ENCODE measurements at regions of chr15 and their contacts with region 1.

Region 1: DNA sequence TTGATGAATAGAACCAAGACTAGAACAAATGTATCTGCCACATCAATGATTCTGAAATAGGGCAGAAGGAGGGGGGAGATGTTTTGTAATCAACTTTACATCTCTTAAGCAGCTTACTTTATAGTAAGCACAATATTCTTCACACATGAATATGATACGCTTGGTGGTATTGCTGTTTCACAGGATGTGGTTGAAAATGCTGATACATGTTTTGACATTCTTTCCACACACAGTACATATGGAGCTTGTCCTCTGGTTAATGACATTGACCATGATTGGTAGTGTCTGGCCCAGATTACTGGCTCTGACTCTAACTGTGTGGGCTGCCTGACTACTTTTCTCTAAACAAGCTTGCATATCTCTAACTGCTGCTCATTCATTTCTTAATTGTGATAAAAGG is 168.9 kb downstream of the KLHL25 start:
- DNase-seq: no peak
- H3K4me3 ChIP-seq: no peak overlapping the region
- H3K27ac ChIP-seq: no peak overlapping the region
- H3K4me1 ChIP-seq: peaks cover 0 to 72% (median 27%) of the 10 kb centered on the region in 4 donors
- H3K27me3 ChIP-seq: no peaks in the 10 kb centered on the region
- CTCF ChIP-seq: no peak

Region 2: GRCh38 chr15:85689729-85690128 is 63.9 kb after region 1 on chr15:
- intact Hi-C with region 1: loop called (anchors 10 kb)
- DNase-seq: peak in 1 of 2 donors; percentile 47
- H3K4me3 ChIP-seq: peak overlapping the region; percentile 35 to 39
- H3K27ac ChIP-seq: peak overlapping the region; percentile 36 to 60
- H3K4me1 ChIP-seq: peaks cover 0 to 36% (median 14%) of the 10 kb centered on the region in 4 donors
- H3K27me3 ChIP-seq: no peaks in the 10 kb centered on the region
- CTCF ChIP-seq: no peak